Gastrocnemius medialis (tissue), 4 donors: ENCODE measurements at regions of chrX and their contacts with region 1.

Region 1: GRCh38 chrX:130772105-130772775 is 130.8 kb downstream of the ENOX2 start:
- DNase-seq: peak; percentile 23 to 28
- ATAC-seq: peak; percentile 85 to 88
- H3K4me3 ChIP-seq: no peak overlapping the region
- H3K27ac ChIP-seq: peak overlapping the region; percentile 58 to 80 (median 72)
- H3K4me1 ChIP-seq: peaks cover 4 to 39% of the 10 kb centered on the region in 2 donors
- H3K27me3 ChIP-seq: no peaks in the 10 kb centered on the region
- CTCF ChIP-seq: no peak
- POLR2A ChIP-seq: no peak

Region 2: GRCh38 chrX:130688360-130688759 is 83.9 kb before region 1 on chrX:
- in situ Hi-C with region 1: no loop called
- intact Hi-C with region 1: no loop called
- DNase-seq: no peak
- ATAC-seq: no peak
- H3K4me3 ChIP-seq: no peak overlapping the region
- H3K27ac ChIP-seq: no peak overlapping the region
- H3K4me1 ChIP-seq: no peaks in the 10 kb centered on the region
- H3K27me3 ChIP-seq: no peaks in the 10 kb centered on the region
- CTCF ChIP-seq: no peak
- POLR2A ChIP-seq: no peak

Region 3: GRCh38 chrX:130710216-130710615 is 62.0 kb before region 1 on chrX:
- in situ Hi-C with region 1: no loop called
- intact Hi-C with region 1: loop called (anchors 5 kb)
- DNase-seq: no peak
- ATAC-seq: no peak
- H3K4me3 ChIP-seq: no peak overlapping the region
- H3K27ac ChIP-seq: no peak overlapping the region
- H3K4me1 ChIP-seq: peaks cover 8 to 12% of the 10 kb centered on the region in 2 donors
- H3K27me3 ChIP-seq: no peaks in the 10 kb centered on the region
- CTCF ChIP-seq: no peak
- POLR2A ChIP-seq: no peak

Region 4: DNA sequence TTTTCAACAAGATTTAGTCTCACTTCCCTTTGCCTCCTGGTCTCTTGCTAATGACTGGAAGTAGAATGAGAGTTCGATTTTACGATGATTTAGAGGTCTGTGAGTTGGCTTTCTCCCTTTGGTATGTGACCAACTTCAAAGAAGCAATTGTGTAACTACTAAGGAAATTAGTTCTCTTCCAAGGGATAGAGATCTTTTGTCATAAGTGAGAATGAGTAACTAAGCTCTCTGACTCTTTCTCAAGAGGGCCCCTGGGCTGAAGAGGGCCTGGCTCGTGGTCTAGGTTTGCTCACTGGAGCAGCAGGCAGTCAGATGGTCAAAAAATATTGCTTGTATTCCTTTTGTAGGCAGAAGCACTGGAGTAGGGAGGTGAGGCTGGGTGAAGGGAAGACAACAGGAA is 45.6 kb before region 1 on chrX:
- in situ Hi-C with region 1: no loop called
- intact Hi-C with region 1: no loop called
- DNase-seq: no peak
- ATAC-seq: no peak
- H3K4me3 ChIP-seq: no peak overlapping the region
- H3K27ac ChIP-seq: no peak overlapping the region
- H3K4me1 ChIP-seq: no peaks in the 10 kb centered on the region
- H3K27me3 ChIP-seq: no peaks in the 10 kb centered on the region
- CTCF ChIP-seq: no peak
- POLR2A ChIP-seq: no peak